Pancreas (tissue), 10 donors: ENCODE measurements at regions of chr12 and their contacts with region 1.

Region 1: GRCh38 chr12:15856097-15856982 is 25.8 kb upstream of the STRAP start:
- DNase-seq: peak in 3 of 6 donors; percentile 25 to 61 (median 30)
- ATAC-seq: peak; percentile 64 to 90 (median 85)
- H3K4me3 ChIP-seq: no peak overlapping the region
- H3K27ac ChIP-seq: no peak overlapping the region
- H3K4me1 ChIP-seq: no peaks in the 10 kb centered on the region
- H3K27me3 ChIP-seq: no peaks in the 10 kb centered on the region
- CTCF ChIP-seq: peak; percentile 40 to 73 (median 70)

Region 2: GRCh38 chr12:15515010-15515409 is 341.3 kb before region 1 on chr12:
- intact Hi-C with region 1: no loop called
- DNase-seq: no peak
- ATAC-seq: no peak
- H3K4me3 ChIP-seq: no peak overlapping the region
- H3K27ac ChIP-seq: no peak overlapping the region
- H3K4me1 ChIP-seq: no peaks in the 10 kb centered on the region
- H3K27me3 ChIP-seq: no peaks in the 10 kb centered on the region
- CTCF ChIP-seq: no peak

Region 3: GRCh38 chr12:15584366-15585041 is 271.8 kb before region 1 on chr12:
- intact Hi-C with region 1: loop called (anchors 5 kb)
- DNase-seq: no peak
- ATAC-seq: peak in 3 of 4 donors; percentile 57 to 69 (median 63)
- H3K4me3 ChIP-seq: no peak overlapping the region
- H3K27ac ChIP-seq: no peak overlapping the region
- H3K4me1 ChIP-seq: no peaks in the 10 kb centered on the region
- H3K27me3 ChIP-seq: no peaks in the 10 kb centered on the region
- CTCF ChIP-seq: peak in 3 of 4 donors; percentile 33 to 44 (median 41)

Region 4: DNA sequence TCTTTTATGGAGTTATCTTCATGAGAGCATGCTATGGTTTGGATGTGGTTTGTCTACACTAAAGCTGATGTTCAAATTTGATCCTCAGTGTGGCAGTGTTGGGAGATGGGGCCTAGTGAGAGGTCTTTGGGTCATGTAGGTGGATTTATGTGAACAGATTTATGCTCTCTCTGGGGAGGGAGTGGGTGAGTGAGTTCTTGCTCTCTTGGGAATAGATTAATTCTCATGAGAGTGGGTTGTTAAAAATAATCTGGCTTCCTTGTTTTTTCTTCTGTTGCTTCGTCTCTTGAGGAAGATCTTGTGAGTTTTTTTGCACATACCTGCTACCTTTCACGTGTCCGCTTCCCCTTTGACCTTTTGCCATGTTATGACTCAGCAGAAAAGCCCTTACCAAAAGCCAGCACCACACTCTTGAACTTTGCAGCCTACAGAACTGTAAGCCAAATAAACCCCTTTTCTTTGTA is 75.3 kb after region 1 on chr12:
- intact Hi-C with region 1: no loop called
- DNase-seq: no peak
- ATAC-seq: no peak
- H3K4me3 ChIP-seq: no peak overlapping the region
- H3K27ac ChIP-seq: no peak overlapping the region
- H3K4me1 ChIP-seq: peaks cover 0 to 12% (median 0%) of the 10 kb centered on the region in 3 donors
- H3K27me3 ChIP-seq: no peaks in the 10 kb centered on the region
- CTCF ChIP-seq: no peak